GM12878 (cell line): ENCODE measurements at regions of chr10 and their contacts with region 1.

Region 1: GRCh38 chr10:122435212-122435827 is 19.1 kb upstream of the ARMS2 start:
- DNase-seq: no peak
- ATAC-seq: peak; percentile 47; the same call in 1 of the 3 replicates
- H3K4me3 ChIP-seq: no peak overlapping the region
- H3K27ac ChIP-seq: no peak overlapping the region
- H3K4me1 ChIP-seq: no peaks in the 10 kb centered on the region
- H3K27me3 ChIP-seq: no peaks in the 10 kb centered on the region
- CTCF ChIP-seq: peak; percentile 30 to 59 (median 40); a peak in 5 of 6 replicates
- EP300 ChIP-seq: no peak
- POLR2A ChIP-seq: no peak
- RAD21 ChIP-seq: peak; percentile 81

Region 2: GRCh38 chr10:122142641-122143237 is 292.6 kb before region 1 on chr10:
- CTCF ChIA-PET with region 1: interaction called, 3 read pairs
- POLR2A ChIA-PET with region 1: no interaction called
- RAD21 ChIA-PET with region 1: no interaction called
- SMC1A ChIA-PET with region 1: no interaction called
- in situ Hi-C with region 1: no loop called
- intact Hi-C with region 1: loop called (anchors 10 kb)
- DNase-seq: no peak
- ATAC-seq: peak; percentile 46
- H3K4me3 ChIP-seq: no peak overlapping the region
- H3K27ac ChIP-seq: no peak overlapping the region
- H3K4me1 ChIP-seq: no peaks in the 10 kb centered on the region
- H3K27me3 ChIP-seq: 0 out of 4 replicates have a peak, but pooled peaks cover 0 to 2% of the 10 kb centered on the region in 2 experiments
- CTCF ChIP-seq: peak; percentile 44 to 88 (median 80)
- EP300 ChIP-seq: no peak
- POLR2A ChIP-seq: no peak
- RAD21 ChIP-seq: peak; percentile 39

Region 3: GRCh38 chr10:122279725-122280141 is 155.6 kb before region 1 on chr10:
- CTCF ChIA-PET with region 1: interaction called, 41 read pairs
- POLR2A ChIA-PET with region 1: no interaction called
- RAD21 ChIA-PET with region 1: interaction called, 6 read pairs
- SMC1A ChIA-PET with region 1: interaction called, 5 read pairs
- in situ Hi-C with region 1: no loop called
- intact Hi-C with region 1: no loop called
- DNase-seq: no peak
- ATAC-seq: peak; percentile 56
- H3K4me3 ChIP-seq: no peak overlapping the region
- H3K27ac ChIP-seq: no peak overlapping the region
- H3K4me1 ChIP-seq: no peaks in the 10 kb centered on the region
- H3K27me3 ChIP-seq: 0 out of 4 replicates have a peak, but pooled peaks cover 0 to 1% of the 10 kb centered on the region in 2 experiments
- CTCF ChIP-seq: peak; percentile 52 to 57 (median 55); a peak in 5 of 6 replicates
- EP300 ChIP-seq: no peak
- POLR2A ChIP-seq: no peak
- RAD21 ChIP-seq: peak; percentile 76

Region 4: DNA sequence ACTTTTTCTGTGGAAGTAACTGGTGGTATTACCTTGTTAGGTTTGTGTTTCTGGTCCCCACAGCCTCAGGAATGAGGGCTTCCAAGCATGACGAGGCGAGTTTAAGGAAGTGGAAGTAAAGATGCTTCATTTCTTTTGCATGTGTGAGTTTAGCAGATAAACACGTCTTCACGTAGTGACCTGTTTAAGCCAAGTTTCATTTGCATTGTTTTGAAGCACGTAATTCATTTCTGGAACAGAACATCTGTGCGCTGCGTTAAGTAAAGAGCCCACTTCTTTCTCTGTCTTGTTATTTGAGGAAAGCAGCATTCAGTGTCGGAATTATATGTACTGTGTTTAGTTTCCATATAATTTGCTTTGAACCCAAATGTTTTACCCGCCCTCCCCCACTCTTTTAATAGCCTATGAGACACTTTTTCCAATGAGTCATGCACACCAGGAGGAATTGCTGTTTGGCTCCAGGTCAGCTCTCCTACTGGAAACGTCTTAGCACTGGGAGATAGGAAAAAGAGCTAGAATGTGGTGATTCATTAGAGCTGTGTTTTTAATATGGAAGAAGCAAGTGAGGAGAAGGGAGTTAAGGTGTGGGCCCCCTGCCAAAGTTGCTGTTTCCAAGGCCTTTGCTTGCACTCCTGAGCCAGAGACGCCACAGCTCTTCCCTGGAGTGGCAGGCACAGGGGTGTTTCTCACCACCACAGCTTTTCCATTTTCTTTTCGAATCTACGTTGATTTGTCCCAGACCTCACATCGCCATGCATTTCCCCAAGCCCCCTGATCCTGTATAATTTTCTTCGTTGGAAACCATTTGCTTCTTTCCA is 127.4 kb before region 1 on chr10:
- CTCF ChIA-PET with region 1: interaction called, 26 read pairs
- POLR2A ChIA-PET with region 1: no interaction called
- RAD21 ChIA-PET with region 1: no interaction called
- SMC1A ChIA-PET with region 1: interaction called, 21 read pairs
- in situ Hi-C with region 1: no loop called
- intact Hi-C with region 1: no loop called
- DNase-seq: peak; percentile 31
- ATAC-seq: peak; percentile 81
- H3K4me3 ChIP-seq: no peak overlapping the region
- H3K27ac ChIP-seq: no peak overlapping the region
- H3K4me1 ChIP-seq: peaks cover 9% of the 10 kb centered on the region
- H3K27me3 ChIP-seq: 0 out of 4 replicates have a peak, but pooled peaks cover 0 to 3% of the 10 kb centered on the region in 2 experiments
- CTCF ChIP-seq: no peak
- EP300 ChIP-seq: peak; percentile 38 to 46; a peak in 2 of 4 replicates
- POLR2A ChIP-seq: no peak
- RAD21 ChIP-seq: no peak

Region 5: DNA sequence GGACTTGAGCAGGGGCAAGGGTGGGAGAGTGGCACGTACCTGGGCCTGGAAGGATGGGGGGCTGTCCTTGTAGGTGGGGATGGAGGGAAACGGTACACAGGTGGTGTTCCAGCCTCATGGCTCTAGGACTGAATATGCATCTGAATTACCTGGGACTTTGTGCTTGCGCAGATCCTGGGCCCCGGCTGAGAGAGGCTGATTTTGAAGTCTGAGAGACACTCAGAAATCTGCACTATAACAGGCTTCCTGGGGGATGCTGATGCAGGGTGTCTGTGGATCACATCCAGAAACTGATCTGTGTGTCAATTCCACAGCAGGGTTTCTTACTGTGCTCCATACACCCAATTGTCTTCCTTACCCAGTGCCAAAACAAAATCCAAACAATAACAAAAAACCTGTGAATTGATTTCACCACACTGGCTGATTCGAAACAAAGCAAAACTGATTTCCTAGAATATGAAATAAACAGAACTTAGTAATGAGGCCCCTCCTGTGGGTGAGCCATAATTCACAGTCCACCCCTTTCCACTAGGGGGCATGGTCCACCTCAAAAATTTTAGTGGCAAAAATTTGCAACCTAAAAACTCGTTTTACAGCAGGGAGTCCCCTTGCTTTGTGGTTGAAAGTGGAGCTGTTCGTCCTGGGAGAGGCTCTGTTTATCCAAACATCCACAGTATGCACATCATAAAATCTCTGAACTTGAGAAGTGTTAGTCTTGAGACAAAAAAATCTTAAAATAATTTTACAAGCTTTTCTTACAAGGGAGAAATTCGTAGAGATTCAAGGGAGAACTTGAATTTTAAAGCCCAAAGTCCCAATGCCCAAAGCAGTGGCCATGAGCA is 92.8 kb before region 1 on chr10:
- CTCF ChIA-PET with region 1: interaction called, 91 read pairs
- POLR2A ChIA-PET with region 1: no interaction called
- RAD21 ChIA-PET with region 1: interaction called, 12 read pairs
- SMC1A ChIA-PET with region 1: interaction called, 43 read pairs
- in situ Hi-C with region 1: no loop called
- intact Hi-C with region 1: loop called (anchors 1 kb)
- DNase-seq: no peak
- ATAC-seq: peak; percentile 74
- H3K4me3 ChIP-seq: no peak overlapping the region
- H3K27ac ChIP-seq: no peak overlapping the region
- H3K4me1 ChIP-seq: no peaks in the 10 kb centered on the region; the same call in 1 of the 2 replicates
- H3K27me3 ChIP-seq: peaks cover 0 to 6% of the 10 kb centered on the region in 2 experiments; a peak in 2 of 4 replicates
- CTCF ChIP-seq: peak; percentile 58 to 63 (median 62)
- EP300 ChIP-seq: no peak
- POLR2A ChIP-seq: no peak
- RAD21 ChIP-seq: peak; percentile 70

Region 6: DNA sequence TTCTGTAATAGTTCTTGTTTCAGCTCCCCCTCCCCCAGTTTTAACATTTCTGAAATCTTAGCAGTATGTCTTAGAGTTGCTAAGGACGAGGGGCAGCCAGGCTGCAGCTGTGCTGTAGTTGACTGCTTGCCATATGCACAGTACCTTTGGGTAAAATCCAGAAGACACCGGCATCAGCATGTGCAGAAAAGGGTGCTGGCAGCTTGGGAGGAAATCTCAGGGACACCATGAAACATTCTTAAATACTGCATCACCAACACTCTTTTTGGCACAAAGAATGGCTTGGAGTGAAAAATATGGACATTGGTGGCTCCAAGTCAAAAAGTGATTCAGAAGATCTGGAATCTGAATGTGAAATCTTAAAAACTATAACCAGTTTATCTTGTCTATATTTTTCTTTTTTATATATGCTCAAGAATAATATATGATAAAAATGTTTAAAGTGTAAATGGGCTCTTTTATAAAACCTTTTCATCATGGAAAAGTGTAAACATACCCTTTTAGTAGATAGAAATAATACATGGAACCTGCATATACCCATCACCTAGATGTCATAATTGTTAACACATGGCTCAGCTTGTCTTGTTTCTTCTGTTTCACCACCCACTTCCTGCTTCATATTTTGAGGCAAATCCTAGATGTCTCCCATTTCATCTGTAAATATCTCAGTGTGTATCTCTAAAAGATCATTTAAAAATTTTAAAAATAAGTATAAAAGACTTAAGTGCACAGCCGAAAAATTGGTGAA is 15.3 kb before region 1 on chr10:
- CTCF ChIA-PET with region 1: interaction called, 25 read pairs
- POLR2A ChIA-PET with region 1: no interaction called
- RAD21 ChIA-PET with region 1: interaction called, 3 read pairs
- SMC1A ChIA-PET with region 1: interaction called, 14 read pairs
- in situ Hi-C with region 1: no loop called
- intact Hi-C with region 1: no loop called
- DNase-seq: no peak
- ATAC-seq: no peak
- H3K4me3 ChIP-seq: no peak overlapping the region
- H3K27ac ChIP-seq: no peak overlapping the region
- H3K4me1 ChIP-seq: no peaks in the 10 kb centered on the region
- H3K27me3 ChIP-seq: no peaks in the 10 kb centered on the region
- CTCF ChIP-seq: no peak
- EP300 ChIP-seq: no peak
- POLR2A ChIP-seq: no peak
- RAD21 ChIP-seq: no peak

Region 7: GRCh38 chr10:122459561-122460273 is 24.4 kb after region 1 on chr10:
- CTCF ChIA-PET with region 1: no interaction called
- POLR2A ChIA-PET with region 1: no interaction called
- RAD21 ChIA-PET with region 1: no interaction called
- SMC1A ChIA-PET with region 1: no interaction called
- in situ Hi-C with region 1: no loop called
- intact Hi-C with region 1: no loop called
- DNase-seq: no peak
- ATAC-seq: no peak
- H3K4me3 ChIP-seq: no peak overlapping the region
- H3K27ac ChIP-seq: no peak overlapping the region
- H3K4me1 ChIP-seq: no peaks in the 10 kb centered on the region
- H3K27me3 ChIP-seq: peaks cover 1 to 14% of the 10 kb centered on the region in 2 experiments
- CTCF ChIP-seq: no peak
- EP300 ChIP-seq: no peak
- POLR2A ChIP-seq: no peak
- RAD21 ChIP-seq: no peak

Region 8: DNA sequence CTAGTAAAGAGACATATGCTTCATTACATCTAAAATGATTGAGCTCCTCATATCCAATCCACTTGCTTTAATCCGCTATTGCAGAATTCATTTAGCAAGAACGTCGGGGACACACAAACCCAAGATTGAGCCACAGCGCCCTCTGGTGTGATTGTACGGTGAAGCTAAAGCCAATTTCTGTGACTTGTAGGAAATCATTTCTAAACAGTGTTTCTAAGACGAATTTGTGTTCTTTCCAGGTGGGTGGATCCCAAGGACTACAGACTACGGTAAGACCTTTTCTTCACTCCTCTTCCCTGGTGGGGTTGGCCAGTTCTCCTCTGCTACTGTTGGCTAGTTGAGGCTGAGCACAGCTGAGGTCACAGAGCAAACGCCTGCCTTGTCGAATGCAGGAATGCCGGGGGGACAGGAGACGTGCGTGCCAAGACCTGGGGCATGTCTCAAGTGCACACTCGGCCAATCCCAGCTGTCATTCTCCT is 130.4 kb after region 1 on chr10:
- CTCF ChIA-PET with region 1: interaction called, 24 read pairs
- POLR2A ChIA-PET with region 1: no interaction called
- RAD21 ChIA-PET with region 1: interaction called, 11 read pairs
- SMC1A ChIA-PET with region 1: interaction called, 7 read pairs
- in situ Hi-C with region 1: no loop called
- intact Hi-C with region 1: loop called (anchors 10 kb)
- DNase-seq: peak; percentile 1
- ATAC-seq: peak; percentile 58
- H3K4me3 ChIP-seq: no peak overlapping the region
- H3K27ac ChIP-seq: no peak overlapping the region
- H3K4me1 ChIP-seq: no peaks in the 10 kb centered on the region
- H3K27me3 ChIP-seq: no peaks in the 10 kb centered on the region; a peak in 2 of 4 replicates
- CTCF ChIP-seq: peak; percentile 65 to 77 (median 71)
- EP300 ChIP-seq: no peak
- POLR2A ChIP-seq: no peak
- RAD21 ChIP-seq: peak; percentile 70

Region 9: DNA sequence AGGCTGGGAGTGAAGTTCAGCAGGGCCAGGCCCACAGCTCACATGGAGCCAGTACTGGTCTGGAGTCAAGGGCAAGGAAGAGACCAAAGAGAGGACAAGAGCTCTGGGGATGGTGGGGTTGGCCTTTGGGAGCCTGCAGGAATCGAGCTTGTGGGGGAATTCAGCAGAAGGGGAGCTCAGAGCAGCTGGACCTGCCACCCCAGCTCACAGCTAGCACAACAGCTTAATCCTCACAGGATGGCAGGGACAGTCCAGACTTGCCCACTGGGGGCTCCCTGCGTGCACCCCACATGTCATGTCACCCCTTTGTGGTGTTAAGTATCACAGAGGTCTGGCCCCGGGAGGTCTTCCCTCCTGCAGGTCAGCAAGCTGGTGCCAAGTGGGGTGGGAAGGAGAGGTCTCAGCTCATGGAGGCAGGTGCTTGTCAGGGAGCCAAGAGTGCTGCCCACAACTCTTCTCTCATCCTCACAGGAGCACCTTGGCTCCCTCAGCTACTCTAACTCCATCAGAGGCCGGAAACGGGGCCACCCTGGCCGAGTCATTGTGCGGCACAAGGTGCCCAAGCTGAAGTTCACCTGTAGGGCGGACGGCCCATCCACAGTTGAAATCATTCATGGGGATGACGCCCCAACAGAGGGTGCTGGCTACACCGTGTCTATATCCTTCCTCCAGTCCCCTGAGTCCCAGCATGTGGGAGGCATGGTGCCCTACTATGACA is 387.8 kb after region 1 on chr10:
- CTCF ChIA-PET with region 1: no interaction called
- POLR2A ChIA-PET with region 1: no interaction called
- RAD21 ChIA-PET with region 1: no interaction called
- SMC1A ChIA-PET with region 1: no interaction called
- in situ Hi-C with region 1: no loop called
- intact Hi-C with region 1: no loop called
- DNase-seq: no peak
- ATAC-seq: no peak; the same call in 2 of the 3 replicates
- H3K4me3 ChIP-seq: no peak overlapping the region
- H3K27ac ChIP-seq: no peak overlapping the region
- H3K4me1 ChIP-seq: no peaks in the 10 kb centered on the region
- H3K27me3 ChIP-seq: no peaks in the 10 kb centered on the region; a peak in 1 of 4 replicates
- CTCF ChIP-seq: no peak
- EP300 ChIP-seq: no peak
- POLR2A ChIP-seq: no peak
- RAD21 ChIP-seq: no peak